SK-N-SH (cell line): ENCODE measurements at regions of chr3 and their contacts with region 1.

Region 1: GRCh38 chr3:177359593-177360357 is 162.5 kb upstream of the TBL1XR1 start:
- DNase-seq: peak; percentile 92
- H3K4me3 ChIP-seq: peak overlapping the region; percentile 33 to 45
- H3K27ac ChIP-seq: peak overlapping the region; percentile 85 to 97
- H3K4me1 ChIP-seq: peaks cover 37 to 40% of the 10 kb centered on the region in 2 experiments
- H3K27me3 ChIP-seq: no peaks in the 10 kb centered on the region
- CTCF ChIP-seq: no peak
- EP300 ChIP-seq: peak; percentile 96 to 99
- RAD21 ChIP-seq: peak; percentile 71

Region 2: DNA sequence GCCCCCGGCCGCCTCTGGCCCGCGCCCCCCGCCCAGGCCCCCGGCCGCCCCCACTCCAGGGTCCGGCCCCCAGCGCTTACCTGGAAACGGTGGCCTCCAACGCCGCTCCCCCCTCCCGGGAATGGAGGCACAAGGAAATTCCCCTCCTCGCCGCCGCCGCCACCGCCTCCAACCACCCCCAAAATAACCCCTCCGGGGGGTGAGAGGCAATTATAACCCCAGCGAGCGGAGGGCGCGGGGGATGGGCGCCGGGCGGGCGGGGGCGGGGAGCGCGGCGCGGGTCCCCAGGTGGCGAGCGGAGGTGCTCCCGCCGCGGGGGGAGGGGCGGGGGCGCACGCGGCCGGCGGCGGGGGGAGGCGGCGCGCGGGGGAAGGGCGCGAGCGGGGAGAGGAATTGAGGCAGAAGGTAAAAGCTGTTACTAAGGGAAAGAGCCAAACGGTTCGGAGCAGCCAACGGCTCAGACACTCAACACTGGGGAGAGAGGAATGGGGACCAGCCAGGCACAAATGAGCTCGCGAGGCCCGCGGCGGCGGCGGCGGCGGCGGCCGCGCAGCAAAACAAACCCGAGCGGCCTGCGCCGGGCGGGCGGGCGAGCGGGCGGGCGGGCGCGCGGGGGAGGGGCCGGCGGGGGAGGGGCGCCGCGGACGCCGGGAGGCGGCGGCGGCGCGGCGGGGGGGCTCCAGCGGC is 162.6 kb before region 1 on chr3 and contains the start of gene TBL1XR1:
- CTCF ChIA-PET with region 1: interaction called, 11 read pairs
- POLR2A ChIA-PET with region 1: interaction called, 51 read pairs
- DNase-seq: peak; percentile 93
- H3K4me3 ChIP-seq: peak within 1 kb of the TSS; percentile 85 to 99
- H3K27ac ChIP-seq: peak within 1 kb of the TSS; percentile 87 to 99
- H3K4me1 ChIP-seq: peaks cover 6 to 8% of the 10 kb centered on the region in 2 experiments; a peak in 3 of 4 replicates
- H3K27me3 ChIP-seq: no peaks in the 10 kb centered on the region
- CTCF ChIP-seq: no peak
- EP300 ChIP-seq: peak; percentile 40 to 89; a peak in 3 of 4 replicates
- RAD21 ChIP-seq: peak; percentile 50
- polyA plus RNA-seq, gene TBL1XR1: 16.7 and 20.9 TPM in 2 replicates

Region 3: DNA sequence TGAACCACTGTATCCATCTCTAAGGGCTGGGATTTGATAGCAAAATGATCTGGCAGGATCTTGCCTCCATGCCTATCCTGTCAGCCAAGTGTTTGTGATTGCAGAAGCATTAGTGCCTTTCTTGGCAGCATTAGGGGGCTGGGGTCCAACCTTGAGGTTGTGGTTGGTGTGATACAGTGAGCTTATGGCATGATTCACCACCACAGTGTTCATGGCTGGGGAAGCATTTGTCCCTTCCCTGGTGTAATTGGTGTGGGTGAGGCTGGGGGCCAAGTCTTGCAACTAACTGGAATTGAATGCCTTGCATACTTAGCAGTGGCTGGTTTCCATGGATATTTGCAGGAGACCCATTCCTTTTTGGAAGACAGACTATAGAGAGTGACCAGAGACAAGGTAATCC is 108.6 kb after region 1 on chr3:
- CTCF ChIA-PET with region 1: no interaction called
- POLR2A ChIA-PET with region 1: no interaction called
- DNase-seq: no peak
- H3K4me3 ChIP-seq: no peak overlapping the region
- H3K27ac ChIP-seq: no peak overlapping the region; a peak in 1 of 4 replicates
- H3K4me1 ChIP-seq: peaks cover 0 to 15% of the 10 kb centered on the region in 2 experiments; a peak in 2 of 4 replicates
- H3K27me3 ChIP-seq: no peaks in the 10 kb centered on the region
- CTCF ChIP-seq: no peak
- EP300 ChIP-seq: peak in 1 of 2 experiments; percentile 88; a peak in 2 of 4 replicates
- RAD21 ChIP-seq: no peak